MCF 10A (cell line): ENCODE measurements at regions of chr2 and their contacts with region 1.

Region 1: DNA sequence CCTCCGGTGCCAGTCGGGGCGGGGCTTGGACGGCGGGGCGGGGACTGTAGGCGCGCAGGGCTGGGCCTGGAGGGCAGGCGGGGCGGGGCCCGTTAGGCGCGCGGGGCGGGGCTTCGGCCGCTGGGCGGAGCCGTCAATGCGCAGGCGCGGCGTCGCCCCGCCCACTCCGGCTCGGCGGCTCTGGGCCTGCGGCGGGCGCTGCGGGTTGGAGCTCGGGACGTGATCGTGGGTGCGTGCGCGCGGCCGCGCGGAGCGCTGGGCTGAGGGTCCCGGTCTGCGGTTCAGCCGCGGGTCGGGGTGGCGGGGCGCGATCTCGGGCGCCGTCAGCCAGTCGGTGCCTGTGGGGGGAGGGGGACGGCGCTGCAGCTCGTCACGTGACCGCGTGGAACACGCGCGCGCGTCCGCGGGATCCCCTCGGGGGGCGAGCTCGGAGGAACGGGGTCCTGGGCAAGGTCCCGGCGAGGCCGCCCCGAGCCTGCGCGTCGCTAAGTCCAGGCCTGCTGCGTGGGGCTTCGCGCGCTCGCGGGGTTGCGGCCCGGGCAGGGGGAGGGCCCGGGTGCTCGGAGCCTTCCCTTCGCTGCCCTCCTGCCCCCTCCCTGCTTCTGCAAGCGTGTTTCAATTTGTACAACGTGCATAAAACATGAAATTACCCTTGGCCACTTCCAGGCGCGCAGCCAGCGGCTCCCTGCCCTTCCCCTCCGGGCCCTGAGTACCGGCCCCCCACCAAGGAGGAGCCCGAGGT is at the start of gene D2HGDH:
- DNase-seq: peak; percentile 85
- H3K4me3 Mint-ChIP-seq: peak within 1 kb of the TSS; percentile 71
- H3K27ac Mint-ChIP-seq: no peak within 1 kb of the TSS
- H3K4me1 Mint-ChIP-seq: peaks cover 10% of the 10 kb centered on the region
- H3K27me3 Mint-ChIP-seq: no peaks in the 10 kb centered on the region
- CTCF ChIP-seq: no peak
- total RNA-seq, gene D2HGDH: 37.5 and 41.5 TPM in 2 replicates

Region 2: DNA sequence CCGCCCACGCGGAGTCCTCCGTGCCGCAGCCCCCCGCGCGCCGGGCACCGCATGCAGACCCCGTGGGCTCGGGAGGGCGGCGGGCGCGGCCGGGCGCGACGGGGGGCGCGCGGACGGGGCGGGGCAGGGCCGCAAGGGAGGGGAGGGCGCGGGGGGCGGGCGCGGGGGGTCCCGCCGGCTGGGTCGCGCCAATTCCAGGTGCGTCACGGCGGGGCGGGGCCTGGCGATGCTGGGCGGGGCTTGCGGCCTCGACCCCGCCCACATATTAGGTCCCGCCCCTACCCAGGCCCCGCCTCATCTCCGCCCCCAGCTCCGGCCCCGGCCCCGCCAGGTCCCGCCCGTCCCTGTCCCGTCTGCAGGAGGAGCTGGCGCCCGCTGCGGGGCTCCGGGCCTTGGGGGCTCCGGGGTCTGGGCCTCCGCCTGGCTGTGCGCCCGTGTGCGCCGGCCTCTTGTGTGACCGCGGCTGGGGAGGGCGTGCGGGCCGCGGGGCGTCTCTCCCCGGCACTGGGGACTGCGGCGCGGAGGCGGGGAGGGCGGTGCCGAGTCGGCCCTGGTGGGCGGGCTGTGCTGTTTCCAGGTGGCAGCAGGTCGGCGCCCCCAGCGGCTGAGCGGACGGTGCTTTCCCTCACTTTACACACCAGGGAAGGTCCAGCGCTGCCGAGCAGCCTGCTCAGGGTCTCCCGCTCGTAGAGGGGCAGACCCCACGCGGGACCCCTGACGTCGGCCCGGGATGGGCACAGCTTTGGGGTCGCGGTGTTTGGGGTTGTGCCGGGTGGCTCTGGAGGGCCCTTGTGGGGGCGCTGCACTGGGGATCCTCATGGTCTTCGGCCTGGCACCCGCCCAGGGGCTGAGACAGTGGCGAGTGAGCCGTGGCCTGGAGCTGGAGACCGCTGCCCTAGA is 32.3 kb before region 1 on chr2:
- CTCF ChIA-PET with region 1: interaction called, 3 read pairs
- POLR2A ChIA-PET with region 1: interaction called, 33 read pairs
- intact Hi-C with region 1: loop called (anchors 2 kb)
- DNase-seq: peak; percentile 69
- H3K4me3 Mint-ChIP-seq: peak overlapping the region; percentile 76
- H3K27ac Mint-ChIP-seq: peak overlapping the region; percentile 41
- H3K4me1 Mint-ChIP-seq: peaks cover 10% of the 10 kb centered on the region
- H3K27me3 Mint-ChIP-seq: no peaks in the 10 kb centered on the region
- CTCF ChIP-seq: peak; percentile 18

Region 3: DNA sequence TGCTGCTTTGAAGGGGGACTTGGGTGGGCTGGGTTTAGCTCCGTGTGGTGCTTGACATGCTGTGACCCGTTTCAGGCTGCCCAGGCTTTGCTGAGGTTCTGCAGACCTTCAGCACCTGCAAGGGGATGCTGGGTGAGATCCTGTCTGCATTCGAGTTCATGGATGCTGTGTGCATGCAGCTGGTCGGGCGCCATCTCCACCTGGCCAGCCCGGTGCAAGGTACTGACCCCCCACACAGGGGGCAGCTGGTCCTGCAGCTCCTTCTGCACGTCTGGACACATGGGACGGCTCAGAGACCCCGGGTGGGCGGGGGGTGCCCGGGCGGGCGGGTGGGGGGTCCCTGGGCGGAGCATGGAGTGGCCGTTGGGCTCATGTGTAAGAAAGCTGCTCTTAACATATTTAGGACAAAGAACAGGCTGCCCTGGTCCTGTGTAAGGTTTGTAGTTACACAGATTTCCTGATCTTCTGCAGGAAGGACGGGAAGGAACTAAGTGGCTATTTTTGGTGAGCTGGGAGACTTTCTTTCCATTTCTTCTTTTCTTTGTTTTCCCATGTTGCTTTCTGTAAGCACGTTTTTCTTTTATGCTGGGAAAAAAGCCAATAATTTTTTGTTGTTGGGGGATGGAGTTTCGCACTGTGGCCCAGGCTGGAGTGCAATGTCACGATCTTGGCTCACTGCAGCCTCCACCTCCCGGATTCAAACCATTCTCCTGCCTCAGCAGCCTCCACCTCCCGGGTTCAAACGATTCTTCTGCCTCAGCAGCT is 15.6 kb after region 1 on chr2:
- CTCF ChIA-PET with region 1: no interaction called
- POLR2A ChIA-PET with region 1: no interaction called
- intact Hi-C with region 1: no loop called
- DNase-seq: no peak
- H3K4me3 Mint-ChIP-seq: no peak overlapping the region
- H3K27ac Mint-ChIP-seq: peak overlapping the region; percentile 30
- H3K4me1 Mint-ChIP-seq: no peaks in the 10 kb centered on the region
- H3K27me3 Mint-ChIP-seq: no peaks in the 10 kb centered on the region
- CTCF ChIP-seq: no peak